ENCODE measurements at regions of chr3 and their contacts with region 1.

Region 1: GRCh38 chr3:126630020-126630419 is 24.9 kb downstream of the TXNRD3 start:
- DNase-seq: no peak
- ATAC-seq: no peak
- H3K4me3 ChIP-seq: no peak overlapping the region
- H3K27ac ChIP-seq: no peak overlapping the region
- H3K4me1 ChIP-seq: no peaks in the 10 kb centered on the region
- H3K27me3 ChIP-seq: no peaks in the 10 kb centered on the region
- CTCF ChIP-seq: no peak

Region 2: DNA sequence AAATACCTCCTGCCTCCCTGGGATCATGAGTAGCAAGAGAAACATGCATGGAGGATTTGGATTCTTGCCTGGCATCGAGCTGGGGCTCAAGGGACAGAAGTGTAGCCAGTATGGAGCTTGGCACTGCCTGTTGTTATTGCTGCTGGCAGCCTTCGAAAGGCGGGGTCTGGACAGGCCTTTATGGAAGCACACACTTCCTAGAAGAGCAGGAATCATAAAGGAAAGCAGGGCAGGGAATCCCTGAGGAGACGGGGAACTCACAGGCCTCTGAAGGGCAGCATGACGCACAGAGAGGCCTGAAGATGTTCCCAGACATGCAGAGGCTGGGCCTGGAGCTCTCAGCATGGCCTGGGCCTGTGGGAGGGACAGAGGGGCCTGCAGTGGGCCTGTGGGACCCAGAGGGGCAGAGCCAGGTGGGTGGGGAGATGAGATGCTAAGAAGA is 527.5 kb before region 1 on chr3:
- CTCF ChIA-PET with region 1: no interaction called
- POLR2A ChIA-PET with region 1: interaction called, 17 read pairs
- in situ Hi-C with region 1: no loop called
- intact Hi-C with region 1: no loop called
- DNase-seq: no peak
- ATAC-seq: no peak
- H3K4me3 ChIP-seq: no peak overlapping the region
- H3K27ac ChIP-seq: no peak overlapping the region
- H3K4me1 ChIP-seq: no peaks in the 10 kb centered on the region
- H3K27me3 ChIP-seq: no peaks in the 10 kb centered on the region
- CTCF ChIP-seq: no peak

Region 3: GRCh38 chr3:126858887-126859286 is 228.9 kb after region 1 on chr3:
- CTCF ChIA-PET with region 1: no interaction called
- POLR2A ChIA-PET with region 1: no interaction called
- in situ Hi-C with region 1: no loop called
- intact Hi-C with region 1: no loop called
- DNase-seq: peak; percentile 73
- ATAC-seq: peak; percentile 98
- H3K4me3 ChIP-seq: no peak overlapping the region
- H3K27ac ChIP-seq: peak overlapping the region; percentile 80
- H3K4me1 ChIP-seq: peaks cover 23% of the 10 kb centered on the region
- H3K27me3 ChIP-seq: no peaks in the 10 kb centered on the region
- CTCF ChIP-seq: no peak

Measured in Panc1 (cell line).